ENCODE measurements at regions of chr6 and their contacts with region 1.

Region 1: GRCh38 chr6:144482142-144482541 is 197.0 kb downstream of the UTRN start:
- DNase-seq: peak; percentile 67 to 72
- ATAC-seq: peak in 3 of 8 donors; percentile 42 to 58 (median 56)
- H3K4me3 ChIP-seq: no peak overlapping the region
- H3K27ac ChIP-seq: peak overlapping the region in 2 of 10 donors; percentile 1 to 10
- H3K4me1 ChIP-seq: peaks cover 0 to 39% (median 22%) of the 10 kb centered on the region in 9 donors
- H3K27me3 ChIP-seq: no peaks in the 10 kb centered on the region
- CTCF ChIP-seq: peak in 8 of 9 donors; percentile 30 to 82 (median 74)

Region 2: DNA sequence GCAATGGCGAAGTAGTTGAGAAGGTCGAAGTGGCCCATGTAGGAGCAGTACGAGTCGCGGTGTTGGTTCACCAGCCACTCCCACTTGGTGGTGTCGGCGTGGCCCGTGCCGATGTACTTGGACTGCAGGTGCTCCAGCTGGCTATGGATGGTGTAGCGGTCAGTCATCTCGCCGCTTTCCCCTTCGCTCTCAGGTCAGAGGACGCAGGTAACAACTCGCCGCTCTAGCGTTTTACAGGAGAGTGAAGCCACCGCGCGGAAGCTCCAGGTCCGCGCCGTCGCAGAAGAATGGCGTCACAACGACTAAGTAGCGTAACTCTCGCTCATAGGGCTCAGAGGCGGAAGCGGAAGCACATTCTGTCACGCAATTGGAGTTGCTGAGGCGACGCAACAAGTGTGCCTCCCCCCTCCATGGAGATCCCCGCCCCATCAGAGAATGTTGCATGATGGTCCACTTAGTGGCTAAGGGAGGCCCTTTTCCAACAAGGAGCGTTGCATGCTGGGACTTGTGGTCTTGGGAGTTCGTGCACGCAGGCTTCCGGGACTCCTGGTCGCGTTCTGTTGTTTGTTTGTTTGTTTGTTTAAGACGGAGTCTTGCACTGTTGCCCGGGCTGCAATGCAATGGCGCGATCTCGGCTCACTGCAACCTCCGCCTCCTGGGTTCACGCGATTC is 386.7 kb before region 1 on chr6 and contains the start of gene SF3B5:
- intact Hi-C with region 1: loop called in 5 of 10 experiments (anchors 5 to 10 kb)
- DNase-seq: peak; percentile 96 to 99
- ATAC-seq: peak; percentile 99 to 100 (median 100)
- H3K4me3 ChIP-seq: peak within 1 kb of the TSS; percentile 48 to 98 (median 84)
- H3K27ac ChIP-seq: peak within 1 kb of the TSS; percentile 59 to 92 (median 86)
- H3K4me1 ChIP-seq: peaks cover 6 to 27% (median 17%) of the 10 kb centered on the region in 9 donors
- H3K27me3 ChIP-seq: no peaks in the 10 kb centered on the region
- CTCF ChIP-seq: peak in 1 of 9 donors; percentile 12
- total RNA-seq, gene SF3B5: 107 to 158 (median 120) TPM

Region 3: GRCh38 chr6:144104898-144105487 is 377.1 kb before region 1 on chr6:
- intact Hi-C with region 1: loop called in 9 of 10 experiments (anchors 2 to 10 kb)
- DNase-seq: peak in 1 of 2 donors; percentile 74
- ATAC-seq: peak; percentile 57 to 91 (median 87)
- H3K4me3 ChIP-seq: no peak overlapping the region
- H3K27ac ChIP-seq: no peak overlapping the region
- H3K4me1 ChIP-seq: peaks cover 0 to 6% (median 0%) of the 10 kb centered on the region in 9 donors
- H3K27me3 ChIP-seq: no peaks in the 10 kb centered on the region
- CTCF ChIP-seq: peak; percentile 48 to 87 (median 72)

Region 4: GRCh38 chr6:144149891-144150709 is 332.0 kb before region 1 on chr6 and contains the start of gene STX11:
- intact Hi-C with region 1: loop called in 1 of 10 experiments (anchors 2 kb)
- DNase-seq: peak; percentile 73 to 80
- ATAC-seq: peak; percentile 93 to 98 (median 94)
- H3K4me3 ChIP-seq: peak within 1 kb of the TSS; percentile 59 to 85 (median 78)
- H3K27ac ChIP-seq: peak within 1 kb of the TSS in 9 of 10 donors; percentile 46 to 94 (median 79)
- H3K4me1 ChIP-seq: peaks cover 0 to 47% (median 13%) of the 10 kb centered on the region in 9 donors
- H3K27me3 ChIP-seq: no peaks in the 10 kb centered on the region
- CTCF ChIP-seq: no peak
- total RNA-seq, gene STX11: 6.9 to 15.9 (median 8.9) TPM

Region 5: GRCh38 chr6:144202879-144203468 is 279.2 kb before region 1 on chr6:
- intact Hi-C with region 1: loop called in 1 of 10 experiments (anchors 10 kb)
- DNase-seq: no peak
- ATAC-seq: no peak
- H3K4me3 ChIP-seq: no peak overlapping the region
- H3K27ac ChIP-seq: no peak overlapping the region
- H3K4me1 ChIP-seq: no peaks in the 10 kb centered on the region
- H3K27me3 ChIP-seq: no peaks in the 10 kb centered on the region
- CTCF ChIP-seq: no peak

Region 6: DNA sequence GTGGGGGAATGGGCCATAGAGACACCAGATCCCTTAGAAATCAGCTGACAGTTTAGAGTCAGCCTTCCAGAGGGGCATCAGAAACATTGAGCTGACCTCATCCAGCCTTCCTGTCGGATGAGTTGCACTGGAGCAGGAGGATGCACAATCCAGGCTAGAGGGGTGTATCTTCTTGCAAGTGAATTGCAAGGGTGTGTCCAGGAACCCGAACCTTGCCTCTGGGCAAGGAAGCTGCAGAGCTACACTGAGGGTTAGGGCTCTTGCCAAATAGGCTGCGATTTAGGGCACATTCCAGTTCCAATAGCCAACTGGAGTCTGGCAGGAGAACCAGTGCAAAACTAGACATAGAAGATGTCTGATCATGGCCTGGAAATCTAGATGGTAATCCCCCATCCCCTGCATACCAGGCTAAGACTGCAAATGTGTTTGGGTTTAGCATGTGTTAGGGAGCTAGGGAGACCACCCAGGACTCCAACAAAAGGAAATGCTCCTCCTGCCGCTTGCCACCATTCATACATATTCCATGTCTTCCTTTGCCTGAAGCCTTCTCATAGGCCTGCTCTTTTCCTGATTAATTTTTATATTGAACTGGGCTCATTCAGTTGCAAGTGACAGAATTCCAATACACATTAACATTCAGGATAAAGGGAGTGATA is 203.4 kb before region 1 on chr6:
- intact Hi-C with region 1: loop called in 2 of 10 experiments (anchors 1 to 10 kb)
- DNase-seq: no peak
- ATAC-seq: peak in 1 of 8 donors; percentile 25
- H3K4me3 ChIP-seq: no peak overlapping the region
- H3K27ac ChIP-seq: no peak overlapping the region
- H3K4me1 ChIP-seq: peaks cover 0 to 6% (median 2%) of the 10 kb centered on the region in 9 donors
- H3K27me3 ChIP-seq: no peaks in the 10 kb centered on the region
- CTCF ChIP-seq: no peak

Region 7: DNA sequence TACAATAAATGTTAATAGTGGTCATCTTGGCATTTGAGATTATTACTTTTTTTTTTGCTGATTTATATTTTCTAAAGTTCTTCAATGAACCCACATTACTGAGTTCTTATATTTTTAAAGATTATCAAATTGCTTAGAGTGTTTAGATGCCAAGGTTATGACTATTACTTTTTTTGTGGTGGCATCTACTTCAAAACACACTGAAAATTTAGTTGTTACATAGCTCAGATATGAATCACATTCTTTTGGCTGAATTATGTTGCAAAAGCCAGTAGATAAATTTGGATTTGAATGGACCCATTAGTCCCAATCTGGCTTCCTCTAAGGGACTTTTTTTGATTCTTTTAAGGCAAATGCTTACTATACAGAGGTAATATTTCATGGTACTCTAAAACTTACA is 188.1 kb before region 1 on chr6:
- intact Hi-C with region 1: loop called in 4 of 10 experiments (anchors 2 to 10 kb)
- DNase-seq: no peak
- ATAC-seq: no peak
- H3K4me3 ChIP-seq: no peak overlapping the region
- H3K27ac ChIP-seq: peak overlapping the region in 1 of 10 donors; percentile 8
- H3K4me1 ChIP-seq: peaks cover 3 to 68% (median 42%) of the 10 kb centered on the region in 9 donors
- H3K27me3 ChIP-seq: no peaks in the 10 kb centered on the region
- CTCF ChIP-seq: no peak

Measured in heart right ventricle (tissue), 16 donors.